CD8-positive, alpha-beta T cell (primary cell): ENCODE measurements at regions of chr3 and their contacts with region 1.

Region 1: DNA sequence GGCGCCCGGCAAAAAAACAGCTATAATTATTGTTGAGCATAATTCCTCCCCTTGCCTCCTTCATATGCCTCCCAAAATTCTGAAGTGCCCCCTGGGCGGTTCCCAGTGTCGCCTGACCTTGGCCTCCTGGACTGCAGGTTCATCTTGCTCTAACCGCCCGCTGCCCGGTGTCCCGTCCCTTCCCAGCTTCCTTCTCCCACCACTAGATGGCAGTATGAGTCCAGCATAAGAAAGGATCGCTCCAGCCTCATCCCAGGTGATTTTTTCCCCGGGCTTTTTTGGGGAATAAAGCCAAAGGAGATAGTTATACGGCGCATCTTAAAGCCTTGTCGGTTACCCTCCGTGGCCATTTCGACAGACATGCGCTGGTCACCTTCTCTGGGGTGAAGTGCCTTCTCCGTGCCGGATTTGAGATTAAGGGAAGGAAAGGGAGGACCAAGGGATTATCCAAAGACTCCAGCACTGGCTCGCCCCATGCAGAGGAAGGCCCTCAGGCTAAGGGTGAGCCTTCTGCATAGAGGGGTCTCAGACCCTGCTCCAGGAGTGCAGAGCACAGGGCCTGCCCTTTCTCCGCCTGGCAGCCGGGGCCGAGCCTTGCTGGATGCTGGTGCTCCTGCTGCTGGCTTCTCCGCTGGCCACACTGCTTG is 45.8 kb upstream of the TRA2B start:
- DNase-seq: peak; percentile 14 to 76 (median 56)
- ATAC-seq: peak; percentile 61
- H3K4me3 ChIP-seq: no peak overlapping the region
- H3K4me3 Mint-ChIP-seq: no peak overlapping the region
- H3K27ac ChIP-seq: no peak overlapping the region
- H3K27ac Mint-ChIP-seq: no peak overlapping the region
- H3K4me1 ChIP-seq: peaks cover 4% of the 10 kb centered on the region
- H3K4me1 Mint-ChIP-seq: peaks cover 3% of the 10 kb centered on the region
- H3K27me3 ChIP-seq: peaks cover 0 to 9% of the 10 kb centered on the region in 2 experiments
- H3K27me3 Mint-ChIP-seq: peaks cover 8% of the 10 kb centered on the region
- CTCF ChIP-seq: peak; percentile 84

Region 2: DNA sequence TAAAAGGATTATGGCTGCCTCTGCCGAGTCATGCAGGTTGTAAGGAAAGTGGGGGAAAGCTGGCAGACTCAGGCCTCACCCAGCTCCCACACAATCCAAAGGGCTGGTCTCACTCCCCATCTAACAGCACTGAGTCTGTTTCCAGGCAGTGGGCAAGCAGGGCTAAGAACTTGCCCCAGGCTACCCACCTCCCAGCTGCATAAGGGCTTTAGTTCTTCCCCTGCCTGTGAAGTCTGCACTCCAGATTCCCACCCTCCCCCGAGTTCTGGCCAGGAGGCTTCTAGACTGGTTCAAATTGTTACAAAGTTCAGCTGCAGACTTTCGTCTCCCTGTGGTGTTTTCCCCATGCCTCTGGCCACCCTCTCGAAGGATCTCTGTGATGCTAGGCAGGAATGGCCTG is 741.0 kb before region 1 on chr3:
- CTCF ChIA-PET with region 1: no interaction called
- POLR2A ChIA-PET with region 1: no interaction called
- intact Hi-C with region 1: no loop called
- DNase-seq: no peak
- ATAC-seq: no peak
- H3K4me3 ChIP-seq: no peak overlapping the region
- H3K4me3 Mint-ChIP-seq: no peak overlapping the region
- H3K27ac ChIP-seq: no peak overlapping the region
- H3K27ac Mint-ChIP-seq: no peak overlapping the region
- H3K4me1 ChIP-seq: no peaks in the 10 kb centered on the region
- H3K4me1 Mint-ChIP-seq: no peaks in the 10 kb centered on the region
- H3K27me3 ChIP-seq: no peaks in the 10 kb centered on the region
- H3K27me3 Mint-ChIP-seq: peaks cover 6% of the 10 kb centered on the region
- CTCF ChIP-seq: no peak

Region 3: GRCh38 chr3:185968168-185968567 is 15.4 kb before region 1 on chr3:
- CTCF ChIA-PET with region 1: interaction called, 11 read pairs
- POLR2A ChIA-PET with region 1: no interaction called
- intact Hi-C with region 1: no loop called
- DNase-seq: no peak
- ATAC-seq: no peak
- H3K4me3 ChIP-seq: no peak overlapping the region
- H3K4me3 Mint-ChIP-seq: no peak overlapping the region
- H3K27ac ChIP-seq: no peak overlapping the region
- H3K27ac Mint-ChIP-seq: no peak overlapping the region
- H3K4me1 ChIP-seq: no peaks in the 10 kb centered on the region
- H3K4me1 Mint-ChIP-seq: no peaks in the 10 kb centered on the region
- H3K27me3 ChIP-seq: no peaks in the 10 kb centered on the region
- H3K27me3 Mint-ChIP-seq: no peaks in the 10 kb centered on the region
- CTCF ChIP-seq: no peak

Region 4: GRCh38 chr3:186225603-186226002 is 242.0 kb after region 1 on chr3:
- CTCF ChIA-PET with region 1: no interaction called
- POLR2A ChIA-PET with region 1: no interaction called
- intact Hi-C with region 1: no loop called
- DNase-seq: no peak
- ATAC-seq: no peak
- H3K4me3 ChIP-seq: no peak overlapping the region
- H3K4me3 Mint-ChIP-seq: no peak overlapping the region
- H3K27ac ChIP-seq: no peak overlapping the region
- H3K27ac Mint-ChIP-seq: no peak overlapping the region
- H3K4me1 ChIP-seq: no peaks in the 10 kb centered on the region
- H3K4me1 Mint-ChIP-seq: no peaks in the 10 kb centered on the region
- H3K27me3 ChIP-seq: no peaks in the 10 kb centered on the region
- H3K27me3 Mint-ChIP-seq: peaks cover 11% of the 10 kb centered on the region
- CTCF ChIP-seq: no peak

Region 5: DNA sequence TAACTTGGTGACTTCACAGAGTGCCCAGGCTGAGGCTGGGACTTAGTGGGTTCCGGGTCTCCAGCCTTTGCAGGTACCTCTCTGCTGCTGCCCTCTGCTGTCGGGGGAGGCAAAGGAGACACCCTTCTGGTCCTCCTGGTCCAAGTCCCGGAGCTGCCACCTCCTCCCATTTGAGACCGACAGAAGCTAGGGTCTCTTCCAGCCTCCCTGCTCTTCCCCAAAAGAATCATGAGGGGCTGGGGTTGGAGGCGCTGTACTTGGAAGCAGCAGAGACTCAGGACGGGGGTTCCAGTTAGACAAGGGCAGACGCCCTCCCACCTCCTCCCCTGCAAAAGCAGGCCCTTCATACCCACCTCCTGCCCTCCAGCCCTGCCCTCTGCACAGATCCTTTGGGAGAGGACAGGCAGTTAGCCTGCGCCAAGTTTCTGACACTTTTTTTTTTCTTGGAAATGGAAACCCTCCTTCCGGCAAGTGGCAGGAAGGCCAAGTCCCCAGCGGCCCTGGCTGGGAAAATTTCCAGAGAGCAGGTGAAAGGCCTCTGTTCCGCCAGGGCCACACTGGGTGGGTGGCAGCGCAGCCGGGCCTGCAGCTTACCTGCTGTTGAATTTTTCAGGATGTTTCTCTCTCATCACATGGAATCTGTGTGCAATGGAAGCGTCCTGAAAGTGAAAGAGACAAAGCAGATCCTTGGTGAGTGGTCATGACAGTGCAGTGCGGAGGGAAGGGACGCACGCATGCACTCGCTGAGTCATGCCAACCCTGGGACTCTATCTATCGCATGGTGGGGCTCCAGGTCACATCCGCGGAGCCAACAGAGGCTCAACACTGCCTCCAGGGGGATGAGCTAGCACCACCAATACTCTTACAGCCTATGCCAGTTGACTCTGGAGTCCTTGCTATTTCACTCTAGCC is 258.5 kb after region 1 on chr3:
- CTCF ChIA-PET with region 1: interaction called, 8 read pairs
- POLR2A ChIA-PET with region 1: no interaction called
- intact Hi-C with region 1: loop called (anchors 1 to 2 kb)
- DNase-seq: peak in 6 of 9 experiments; percentile 28 to 61 (median 46)
- ATAC-seq: peak; percentile 80
- H3K4me3 ChIP-seq: no peak overlapping the region
- H3K4me3 Mint-ChIP-seq: no peak overlapping the region
- H3K27ac ChIP-seq: no peak overlapping the region
- H3K27ac Mint-ChIP-seq: no peak overlapping the region
- H3K4me1 ChIP-seq: no peaks in the 10 kb centered on the region
- H3K4me1 Mint-ChIP-seq: peaks cover 4% of the 10 kb centered on the region
- H3K27me3 ChIP-seq: no peaks in the 10 kb centered on the region
- H3K27me3 Mint-ChIP-seq: peaks cover 9% of the 10 kb centered on the region
- CTCF ChIP-seq: no peak

Region 6: DNA sequence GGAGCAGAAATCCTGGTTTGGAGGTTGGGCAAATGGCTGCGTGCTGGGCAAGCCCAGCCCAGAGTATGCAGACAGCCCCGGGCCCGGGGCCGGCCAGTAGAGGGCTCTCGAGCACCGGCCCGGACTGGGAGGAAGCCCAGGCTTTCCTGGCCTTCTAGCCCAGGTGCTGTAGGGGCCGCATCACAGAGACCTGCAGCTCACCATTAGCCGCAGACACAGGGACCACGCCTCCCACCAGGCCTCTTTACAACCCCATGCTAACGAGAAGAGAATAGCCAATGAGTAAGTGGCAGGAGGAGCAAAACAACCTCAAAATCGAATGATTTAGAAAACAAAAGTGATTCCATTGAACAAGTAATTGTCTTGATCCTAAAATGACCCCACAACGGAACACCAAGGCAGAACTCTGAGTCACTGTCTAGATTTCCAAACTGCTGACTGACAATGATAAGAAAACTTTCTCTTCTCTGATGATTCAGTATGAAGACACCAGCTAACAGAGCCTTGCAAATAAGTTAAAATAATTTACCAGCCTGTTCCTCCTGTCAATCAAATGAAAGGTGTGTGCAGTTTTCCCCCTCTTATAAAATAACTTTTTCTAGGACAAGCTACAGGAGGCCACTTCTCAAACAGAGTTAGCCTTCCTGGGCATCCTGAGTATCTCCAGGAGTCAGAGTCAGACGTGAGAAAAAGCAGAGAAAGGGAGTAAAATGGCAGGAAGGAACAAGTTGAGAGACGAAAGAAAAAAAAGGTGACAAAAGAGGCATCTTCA is 276.2 kb after region 1 on chr3:
- CTCF ChIA-PET with region 1: interaction called, 12 read pairs
- POLR2A ChIA-PET with region 1: no interaction called
- intact Hi-C with region 1: loop called (anchors 1 to 5 kb)
- DNase-seq: peak; percentile 42 to 80 (median 54)
- ATAC-seq: peak; percentile 93
- H3K4me3 ChIP-seq: no peak overlapping the region
- H3K4me3 Mint-ChIP-seq: no peak overlapping the region
- H3K27ac ChIP-seq: no peak overlapping the region
- H3K27ac Mint-ChIP-seq: peak overlapping the region; percentile 66
- H3K4me1 ChIP-seq: no peaks in the 10 kb centered on the region
- H3K4me1 Mint-ChIP-seq: peaks cover 16% of the 10 kb centered on the region
- H3K27me3 ChIP-seq: no peaks in the 10 kb centered on the region
- H3K27me3 Mint-ChIP-seq: no peaks in the 10 kb centered on the region
- CTCF ChIP-seq: peak; percentile 59

Region 7: DNA sequence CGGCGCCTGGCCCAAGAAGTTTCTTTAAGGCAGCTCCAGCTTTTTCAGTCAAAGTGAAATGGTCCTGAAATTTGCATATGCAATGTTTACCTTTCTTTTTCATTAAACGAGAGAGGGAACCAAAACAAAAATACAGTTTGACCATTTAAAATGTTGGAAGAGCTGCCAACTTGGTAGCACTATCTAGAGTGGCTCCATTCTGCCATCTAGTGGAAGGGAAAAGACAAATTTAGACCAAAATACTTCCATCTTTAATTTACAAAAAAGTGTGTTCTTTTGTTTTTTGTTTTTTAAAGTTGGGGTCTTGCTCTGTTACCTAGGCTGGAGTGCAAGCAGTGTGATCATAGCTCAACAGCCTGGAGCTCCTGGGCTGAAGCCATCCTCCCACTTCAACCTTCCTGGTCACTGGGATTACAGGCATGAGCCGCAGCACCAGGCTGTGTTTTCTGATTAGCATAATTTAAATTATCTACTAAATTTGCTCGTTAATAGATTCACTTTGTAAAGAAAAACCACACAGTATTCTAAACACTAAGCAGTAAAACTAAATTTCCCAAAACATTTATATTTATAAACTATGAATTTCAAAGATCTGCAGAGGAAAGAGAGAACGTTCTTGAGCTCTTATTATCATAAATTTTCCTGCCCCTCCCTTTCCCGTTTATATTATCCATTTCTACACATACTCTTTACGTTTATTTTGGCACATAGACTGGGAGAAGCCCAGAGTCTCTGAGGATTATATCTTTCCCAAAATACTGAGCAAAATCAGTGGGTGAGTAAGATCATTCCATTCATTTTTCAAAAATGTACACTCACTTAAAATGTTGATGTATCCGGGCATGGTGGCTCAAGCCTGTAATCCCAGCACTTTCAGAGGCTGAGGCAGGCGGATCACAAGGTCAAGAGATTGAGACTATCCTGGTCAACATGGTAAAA is 838.1 kb after region 1 on chr3:
- CTCF ChIA-PET with region 1: interaction called, 3 read pairs
- POLR2A ChIA-PET with region 1: no interaction called
- intact Hi-C with region 1: loop called in 1 of 2 experiments (anchors 1 kb)
- DNase-seq: peak in 3 of 9 experiments; percentile 31 to 75 (median 68)
- ATAC-seq: peak; percentile 30
- H3K4me3 ChIP-seq: no peak overlapping the region
- H3K4me3 Mint-ChIP-seq: no peak overlapping the region
- H3K27ac ChIP-seq: no peak overlapping the region
- H3K27ac Mint-ChIP-seq: no peak overlapping the region
- H3K4me1 ChIP-seq: peaks cover 12% of the 10 kb centered on the region
- H3K4me1 Mint-ChIP-seq: peaks cover 14% of the 10 kb centered on the region
- H3K27me3 ChIP-seq: peaks cover 4 to 7% of the 10 kb centered on the region in 2 experiments
- H3K27me3 Mint-ChIP-seq: peaks cover 18% of the 10 kb centered on the region
- CTCF ChIP-seq: peak; percentile 76